Activated CD8-positive, alpha-beta T cell treated with anti-CD3 and anti-CD28 coated beads for 36 hours (primary cell): ENCODE measurements at regions of chr6 and their contacts with region 1.

Region 1: DNA sequence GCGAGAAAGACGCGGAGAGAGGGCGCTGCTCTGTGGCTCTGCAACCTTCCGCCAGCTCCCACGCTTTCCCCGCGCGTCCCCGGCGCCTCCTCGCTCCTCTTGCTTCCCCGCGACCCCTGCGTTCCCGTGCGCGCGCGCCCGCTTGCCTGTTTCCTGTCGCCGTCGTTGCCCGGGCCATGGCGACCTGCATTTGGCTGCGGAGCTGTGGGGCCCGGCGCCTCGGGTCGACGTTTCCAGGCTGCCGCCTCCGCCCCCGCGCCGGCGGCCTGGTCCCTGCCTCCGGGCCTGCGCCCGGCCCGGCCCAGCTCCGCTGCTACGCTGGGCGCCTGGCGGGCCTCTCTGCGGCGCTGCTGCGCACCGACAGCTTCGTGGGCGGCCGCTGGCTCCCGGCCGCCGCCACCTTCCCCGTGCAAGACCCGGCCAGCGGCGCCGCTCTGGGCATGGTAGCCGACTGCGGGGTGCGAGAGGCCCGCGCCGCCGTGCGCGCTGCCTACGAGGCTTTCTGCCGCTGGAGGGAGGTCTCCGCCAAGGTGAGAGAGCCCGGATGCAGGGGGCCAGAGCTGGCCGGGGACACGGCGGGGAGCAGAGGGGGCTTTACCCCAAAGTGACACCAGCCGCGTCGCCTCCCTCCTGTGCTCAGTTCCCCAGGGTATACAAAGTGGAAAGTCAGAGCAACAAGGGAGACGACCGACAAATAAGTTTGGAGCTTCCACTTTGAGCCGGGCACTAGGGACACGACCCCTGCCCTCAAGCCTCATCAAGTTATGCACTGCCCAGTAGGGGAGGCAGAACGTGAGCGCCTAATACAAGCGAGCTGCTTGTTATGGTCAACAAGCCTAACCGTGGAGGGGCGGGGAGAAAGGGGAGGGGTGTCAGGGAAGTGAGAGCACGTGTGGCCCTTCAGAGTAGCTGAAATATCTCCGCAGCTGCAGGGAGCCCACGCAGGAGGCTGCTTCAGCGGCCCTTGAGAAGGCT is at the start of gene ALDH5A1:
- DNase-seq: peak; percentile 92
- ATAC-seq: peak; percentile 81
- H3K4me3 Mint-ChIP-seq: peak within 1 kb of the TSS; percentile 78
- H3K27ac Mint-ChIP-seq: peak within 1 kb of the TSS; percentile 74
- H3K4me1 Mint-ChIP-seq: peaks cover 28% of the 10 kb centered on the region
- H3K27me3 Mint-ChIP-seq: no peaks in the 10 kb centered on the region
- CTCF ChIP-seq: peak; percentile 39
- total RNA-seq, gene ALDH5A1: 20.7 to 20.8 TPM

Region 2: GRCh38 chr6:24481449-24481848 is 13.7 kb before region 1 on chr6:
- CTCF ChIA-PET with region 1: interaction called, 22 read pairs
- POLR2A ChIA-PET with region 1: interaction called, 5 read pairs
- intact Hi-C with region 1: no loop called
- DNase-seq: no peak
- ATAC-seq: no peak
- H3K4me3 Mint-ChIP-seq: no peak overlapping the region
- H3K27ac Mint-ChIP-seq: no peak overlapping the region
- H3K4me1 Mint-ChIP-seq: no peaks in the 10 kb centered on the region
- H3K27me3 Mint-ChIP-seq: no peaks in the 10 kb centered on the region
- CTCF ChIP-seq: no peak

Region 3: GRCh38 chr6:24513602-24514001 is 18.5 kb after region 1 on chr6:
- CTCF ChIA-PET with region 1: interaction called, 14 read pairs
- POLR2A ChIA-PET with region 1: no interaction called
- intact Hi-C with region 1: no loop called
- DNase-seq: no peak
- ATAC-seq: no peak
- H3K4me3 Mint-ChIP-seq: no peak overlapping the region
- H3K27ac Mint-ChIP-seq: no peak overlapping the region
- H3K4me1 Mint-ChIP-seq: peaks cover 3% of the 10 kb centered on the region
- H3K27me3 Mint-ChIP-seq: no peaks in the 10 kb centered on the region
- CTCF ChIP-seq: no peak

Region 4: DNA sequence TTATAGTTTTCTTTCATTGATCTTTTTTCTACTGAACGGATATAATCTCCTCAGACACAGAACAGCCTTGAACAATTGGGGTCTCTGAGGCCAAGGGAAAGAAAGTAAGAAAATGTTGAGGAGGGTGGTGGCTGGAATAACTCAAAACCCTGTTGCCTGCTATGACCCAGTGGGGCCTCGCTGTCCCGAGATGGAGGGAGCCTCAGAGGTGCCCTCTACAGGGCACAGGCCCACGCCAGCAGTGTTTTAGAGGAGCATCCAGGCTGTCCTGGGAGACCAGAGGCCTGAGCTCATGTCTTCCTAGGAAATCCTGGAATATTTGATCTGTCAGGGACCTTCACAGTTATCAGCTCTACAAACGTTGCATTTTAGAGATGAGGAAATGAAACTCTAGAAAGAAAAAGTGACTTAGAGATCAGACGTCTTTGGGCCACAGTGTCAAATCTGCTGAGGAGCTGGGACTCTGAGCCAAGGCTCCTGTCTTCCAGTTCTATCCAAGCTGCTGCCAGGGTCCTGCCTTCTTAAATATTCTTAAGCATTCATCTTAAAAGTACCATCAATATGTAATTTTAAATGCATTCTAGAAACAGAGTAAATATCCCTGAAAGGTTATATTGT is 25.9 kb after region 1 on chr6:
- CTCF ChIA-PET with region 1: interaction called, 29 read pairs
- POLR2A ChIA-PET with region 1: no interaction called
- intact Hi-C with region 1: no loop called
- DNase-seq: peak; percentile 59
- ATAC-seq: peak; percentile 85
- H3K4me3 Mint-ChIP-seq: no peak overlapping the region
- H3K27ac Mint-ChIP-seq: no peak overlapping the region
- H3K4me1 Mint-ChIP-seq: peaks cover 3% of the 10 kb centered on the region
- H3K27me3 Mint-ChIP-seq: no peaks in the 10 kb centered on the region
- CTCF ChIP-seq: peak; percentile 62